ENCODE measurements at regions of chr9 and their contacts with region 1.

Region 1: DNA sequence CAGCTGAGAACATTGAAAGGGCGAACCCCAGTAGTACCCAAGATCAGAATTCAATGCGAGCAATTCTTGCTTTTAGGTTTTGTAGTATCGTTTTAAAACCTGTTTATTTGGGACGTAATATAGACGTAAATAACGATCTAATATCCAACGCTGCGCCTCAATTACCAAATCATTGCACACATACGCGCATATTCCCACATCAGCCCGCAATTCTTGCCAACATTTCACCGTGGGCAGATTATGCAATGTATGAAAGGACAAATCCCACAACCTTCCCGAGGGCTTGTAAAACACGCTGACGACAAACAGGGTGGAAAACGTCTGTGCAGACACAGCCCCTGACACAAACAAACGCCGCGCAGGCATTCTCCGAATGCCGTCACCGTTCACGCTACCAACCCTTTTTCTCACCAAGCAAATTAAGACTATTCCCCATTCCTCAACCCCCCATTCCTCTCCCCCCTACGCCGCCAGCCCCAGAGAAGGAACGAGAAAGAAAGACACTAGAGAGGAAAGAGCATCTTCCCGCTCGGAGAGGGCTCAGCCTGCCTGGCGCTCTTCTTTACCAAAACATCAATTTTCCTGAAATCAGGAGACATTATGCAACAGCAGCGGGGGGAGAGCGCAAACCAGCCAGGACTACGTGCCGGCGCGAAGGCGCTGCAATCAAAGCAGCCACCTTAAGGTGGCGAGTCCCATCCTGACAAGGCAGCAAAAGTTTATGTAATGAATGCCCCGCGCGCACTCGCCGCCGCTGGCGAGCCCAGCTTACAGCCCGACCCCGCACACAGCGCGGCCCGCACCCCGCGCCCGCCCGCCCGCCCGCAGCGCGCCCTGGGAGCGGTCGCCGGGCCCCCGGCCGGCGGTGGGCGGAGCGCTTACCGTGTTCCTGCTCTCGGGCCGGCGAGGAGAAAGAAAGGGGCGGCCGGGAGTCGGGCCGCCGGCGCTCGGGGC is 597 bp downstream of the NFIL3 start:
- DNase-seq: peak; percentile 74
- H3K4me3 Mint-ChIP-seq: peak overlapping the region; percentile 94
- H3K27ac Mint-ChIP-seq: peak overlapping the region; percentile 81
- H3K4me1 Mint-ChIP-seq: peaks cover 57% of the 10 kb centered on the region
- H3K27me3 Mint-ChIP-seq: peaks cover 9% of the 10 kb centered on the region

Region 2: DNA sequence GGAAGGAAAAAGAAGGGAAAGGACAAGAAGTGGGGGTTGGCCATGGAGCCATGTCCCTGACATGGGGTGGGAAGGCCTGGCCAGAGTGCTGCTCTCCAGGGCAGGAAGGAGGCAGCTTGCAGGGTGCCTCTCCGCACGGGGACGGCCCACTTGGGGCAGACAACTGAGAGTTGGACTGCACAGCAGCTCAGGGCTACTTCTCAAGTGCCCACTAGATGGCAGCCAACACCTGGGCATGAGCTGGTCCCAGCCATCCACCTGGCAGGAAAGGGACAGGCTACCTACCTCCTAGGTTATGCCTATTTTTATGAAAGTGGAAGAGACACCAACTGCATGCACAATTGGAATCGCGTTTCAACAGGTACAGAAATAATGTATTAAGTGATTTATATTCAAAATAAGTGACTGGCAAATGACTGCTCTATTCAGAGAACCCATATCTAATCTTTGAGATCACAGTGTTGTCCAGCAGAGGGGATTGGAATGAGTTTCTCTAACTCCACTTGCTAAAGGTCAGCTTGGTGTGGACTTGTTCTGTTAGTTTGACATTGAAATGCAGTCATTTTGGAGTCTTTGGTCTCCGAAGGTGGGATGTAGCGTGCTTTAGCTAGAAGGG is 508.1 kb before region 1 on chr9:
- CTCF ChIA-PET with region 1: interaction called, 71 read pairs
- intact Hi-C with region 1: loop called (anchors 1 kb)
- DNase-seq: peak; percentile 82
- H3K4me3 Mint-ChIP-seq: no peak overlapping the region
- H3K27ac Mint-ChIP-seq: no peak overlapping the region
- H3K4me1 Mint-ChIP-seq: no peaks in the 10 kb centered on the region
- H3K27me3 Mint-ChIP-seq: no peaks in the 10 kb centered on the region

Region 3: GRCh38 chr9:91036826-91037510 is 386.1 kb before region 1 on chr9:
- CTCF ChIA-PET with region 1: interaction called, 61 read pairs
- intact Hi-C with region 1: loop called (anchors 1 kb)
- DNase-seq: peak; percentile 87
- H3K4me3 Mint-ChIP-seq: peak overlapping the region; percentile 42
- H3K27ac Mint-ChIP-seq: no peak overlapping the region
- H3K4me1 Mint-ChIP-seq: peaks cover 27% of the 10 kb centered on the region
- H3K27me3 Mint-ChIP-seq: peaks cover 36% of the 10 kb centered on the region

Region 4: DNA sequence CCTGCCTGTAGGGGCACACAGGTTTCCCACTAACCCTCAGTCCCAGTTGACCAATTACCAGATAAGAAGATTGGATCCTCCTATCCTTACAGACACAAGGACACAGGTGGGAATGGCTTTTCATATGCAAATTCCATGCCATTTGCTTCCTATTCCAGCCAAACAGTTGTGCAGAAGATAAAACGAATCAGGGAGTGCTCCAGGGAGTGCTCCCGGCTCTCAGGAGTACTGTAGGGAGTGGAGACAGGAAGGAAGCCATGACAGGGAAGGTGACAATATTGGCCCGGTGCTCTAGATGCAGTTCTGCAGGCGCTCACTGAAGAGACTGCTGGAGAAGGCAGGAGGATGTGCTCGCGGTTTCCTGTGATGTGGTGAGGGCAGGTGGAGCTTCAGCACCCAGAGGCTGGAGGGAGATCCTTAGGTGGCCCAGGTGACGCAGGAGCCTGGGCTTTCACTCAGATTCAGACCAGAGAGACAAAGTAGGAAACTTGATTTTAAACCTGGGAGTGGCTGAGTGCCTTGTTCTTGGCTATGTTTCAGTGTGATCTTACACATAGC is 321.3 kb before region 1 on chr9:
- CTCF ChIA-PET with region 1: interaction called, 3 read pairs
- intact Hi-C with region 1: loop called (anchors 2 kb)
- DNase-seq: peak; percentile 97
- H3K4me3 Mint-ChIP-seq: peak overlapping the region; percentile 59
- H3K27ac Mint-ChIP-seq: peak overlapping the region; percentile 14
- H3K4me1 Mint-ChIP-seq: peaks cover 41% of the 10 kb centered on the region
- H3K27me3 Mint-ChIP-seq: peaks cover 3% of the 10 kb centered on the region

Region 5: GRCh38 chr9:91285729-91286353 is 137.2 kb before region 1 on chr9:
- CTCF ChIA-PET with region 1: no interaction called
- intact Hi-C with region 1: loop called (anchors 5 kb)
- DNase-seq: no peak
- H3K4me3 Mint-ChIP-seq: no peak overlapping the region
- H3K27ac Mint-ChIP-seq: peak overlapping the region; percentile 61
- H3K4me1 Mint-ChIP-seq: peaks cover 14% of the 10 kb centered on the region
- H3K27me3 Mint-ChIP-seq: no peaks in the 10 kb centered on the region

Region 6: GRCh38 chr9:91474656-91475055 is 51.6 kb after region 1 on chr9:
- CTCF ChIA-PET with region 1: no interaction called
- intact Hi-C with region 1: no loop called
- DNase-seq: no peak
- H3K4me3 Mint-ChIP-seq: no peak overlapping the region
- H3K27ac Mint-ChIP-seq: no peak overlapping the region
- H3K4me1 Mint-ChIP-seq: no peaks in the 10 kb centered on the region
- H3K27me3 Mint-ChIP-seq: peaks cover 38% of the 10 kb centered on the region

Region 7: DNA sequence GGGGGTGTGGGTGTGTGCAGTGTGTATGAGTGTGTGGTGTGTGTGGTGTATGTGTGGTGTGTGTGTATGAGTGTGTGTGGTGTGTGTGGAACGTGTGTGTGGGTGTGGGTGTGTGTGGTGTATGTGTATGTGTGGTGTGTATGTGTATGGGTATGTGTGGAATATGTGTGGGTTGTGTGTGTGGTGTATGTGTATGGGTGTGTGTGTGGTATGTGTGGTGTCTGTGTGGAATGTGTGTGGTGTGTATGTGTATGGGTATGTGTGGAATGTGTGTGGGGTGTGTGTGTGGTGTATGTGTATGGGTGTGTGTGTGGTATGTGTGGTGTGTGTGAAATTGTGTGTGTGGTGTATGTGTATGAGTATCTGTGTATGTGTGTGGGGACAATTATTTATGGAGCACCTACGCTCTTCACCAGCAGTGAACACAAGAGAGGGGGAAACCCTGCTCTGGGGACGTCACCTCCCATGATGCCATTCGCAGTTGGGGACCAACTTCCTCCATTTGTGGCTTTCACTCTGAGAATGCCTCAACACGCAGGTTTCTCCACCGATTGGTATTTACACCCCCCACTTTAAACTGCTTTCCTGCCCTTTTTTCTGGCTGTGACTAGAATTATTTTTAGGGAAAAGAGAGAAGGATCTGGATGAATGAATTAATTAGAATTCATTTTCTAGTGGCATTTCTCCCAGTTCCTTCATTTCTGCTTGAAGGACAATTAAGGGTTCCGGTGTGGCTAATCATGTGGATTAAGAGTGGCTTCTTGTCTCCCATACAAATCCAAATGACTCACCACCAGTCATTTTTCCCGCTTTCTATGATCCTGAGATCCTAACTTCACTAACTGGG is 288.9 kb after region 1 on chr9:
- CTCF ChIA-PET with region 1: no interaction called
- intact Hi-C with region 1: loop called (anchors 2 kb)
- DNase-seq: peak; percentile 92
- H3K4me3 Mint-ChIP-seq: no peak overlapping the region
- H3K27ac Mint-ChIP-seq: no peak overlapping the region
- H3K4me1 Mint-ChIP-seq: no peaks in the 10 kb centered on the region
- H3K27me3 Mint-ChIP-seq: peaks cover 28% of the 10 kb centered on the region